Calu3 (cell line): ENCODE measurements at regions of chr12 and their contacts with region 1.

Region 1: GRCh38 chr12:8065991-8066594 is at the start of gene C3AR1:
- DNase-seq: no peak
- H3K4me3 Mint-ChIP-seq: no peak within 1 kb of the TSS
- H3K27ac Mint-ChIP-seq: no peak within 1 kb of the TSS
- H3K4me1 Mint-ChIP-seq: peaks cover 8% of the 10 kb centered on the region
- H3K27me3 Mint-ChIP-seq: no peaks in the 10 kb centered on the region
- CTCF ChIP-seq: no peak
- total RNA-seq, gene C3AR1: not detected in 2 replicates

Region 2: DNA sequence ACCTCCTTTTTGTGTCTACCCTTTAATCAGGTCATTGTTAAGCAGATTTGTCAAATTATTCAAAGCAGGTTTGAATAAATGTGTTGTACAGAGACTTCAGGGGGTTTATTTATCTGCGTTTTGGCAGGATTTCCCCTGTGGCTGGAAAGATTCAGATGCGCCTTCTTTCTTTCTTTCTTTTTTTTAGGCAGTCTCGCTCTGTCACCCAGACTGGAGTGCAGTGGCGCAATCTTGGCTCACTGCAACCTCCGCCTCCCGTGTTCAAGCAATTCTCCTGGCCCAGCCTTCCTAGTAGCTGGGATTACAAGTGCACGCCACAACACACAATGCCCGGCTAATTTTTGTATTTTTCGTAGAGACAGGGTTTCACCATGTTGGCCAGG is 307.3 kb before region 1 on chr12:
- CTCF ChIA-PET with region 1: no interaction called
- intact Hi-C with region 1: no loop called
- DNase-seq: no peak
- H3K4me3 Mint-ChIP-seq: no peak overlapping the region
- H3K27ac Mint-ChIP-seq: no peak overlapping the region
- H3K4me1 Mint-ChIP-seq: no peaks in the 10 kb centered on the region
- H3K27me3 Mint-ChIP-seq: peaks cover 12% of the 10 kb centered on the region
- CTCF ChIP-seq: no peak

Region 3: DNA sequence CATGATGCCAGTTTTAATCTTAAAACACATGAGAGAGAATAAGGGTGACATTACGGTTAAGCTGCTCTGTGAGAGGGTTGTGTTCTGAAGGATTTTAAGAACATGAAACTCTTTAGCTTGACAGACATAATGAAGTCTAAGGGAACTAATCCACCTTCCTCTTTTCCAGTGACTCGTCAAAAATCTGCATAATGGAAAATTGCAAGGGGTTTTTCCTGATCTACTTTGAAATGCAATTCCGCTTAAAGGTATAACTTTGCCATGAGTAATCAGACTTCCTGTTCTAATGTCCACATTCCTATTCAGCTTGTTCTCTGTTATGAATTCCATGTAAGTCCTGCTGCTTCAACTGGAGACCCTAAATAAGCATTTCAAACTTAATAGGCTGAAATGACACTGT is 90.8 kb after region 1 on chr12 and contains the start of gene ZNF705A:
- CTCF ChIA-PET with region 1: interaction called, 11 read pairs
- intact Hi-C with region 1: no loop called
- DNase-seq: no peak
- H3K4me3 Mint-ChIP-seq: peak within 1 kb of the TSS; percentile 18
- H3K27ac Mint-ChIP-seq: peak within 1 kb of the TSS; percentile 88
- H3K4me1 Mint-ChIP-seq: peaks cover 47% of the 10 kb centered on the region
- H3K27me3 Mint-ChIP-seq: no peaks in the 10 kb centered on the region
- CTCF ChIP-seq: no peak
- total RNA-seq, gene ZNF705A: not detected in 2 replicates